A673 (cell line): ENCODE measurements at regions of chr16 and their contacts with region 1.

Region 1: GRCh38 chr16:76294396-76295214 is 17.4 kb downstream of the CNTNAP4 start:
- DNase-seq: no peak
- H3K4me3 ChIP-seq: no peak overlapping the region
- H3K27ac ChIP-seq: no peak overlapping the region
- H3K4me1 ChIP-seq: no peaks in the 10 kb centered on the region
- H3K27me3 ChIP-seq: no peaks in the 10 kb centered on the region
- CTCF ChIP-seq: no peak

Region 2: DNA sequence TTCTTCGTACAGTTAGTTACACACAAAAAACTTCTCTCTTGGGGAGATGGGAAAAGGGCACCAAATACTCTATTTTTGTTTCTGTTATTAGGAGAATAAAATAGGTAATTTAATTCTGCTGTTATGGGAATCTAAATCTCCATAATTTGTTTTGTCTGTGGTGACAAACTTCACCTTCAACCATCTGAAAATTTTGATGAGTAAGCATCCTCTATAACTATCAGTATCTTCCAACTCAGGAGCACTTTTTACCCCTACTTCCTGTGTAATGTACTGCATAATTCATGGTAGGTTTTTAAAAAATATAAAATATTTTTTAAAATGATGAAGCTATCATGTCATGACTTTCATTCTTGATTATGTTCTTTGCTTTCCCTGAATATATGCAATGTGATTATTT is 51.0 kb before region 1 on chr16:
- CTCF ChIA-PET with region 1: no interaction called
- POLR2A ChIA-PET with region 1: no interaction called
- intact Hi-C with region 1: no loop called
- DNase-seq: no peak
- H3K4me3 ChIP-seq: no peak overlapping the region
- H3K27ac ChIP-seq: no peak overlapping the region
- H3K4me1 ChIP-seq: no peaks in the 10 kb centered on the region
- H3K27me3 ChIP-seq: no peaks in the 10 kb centered on the region
- CTCF ChIP-seq: no peak

Region 3: DNA sequence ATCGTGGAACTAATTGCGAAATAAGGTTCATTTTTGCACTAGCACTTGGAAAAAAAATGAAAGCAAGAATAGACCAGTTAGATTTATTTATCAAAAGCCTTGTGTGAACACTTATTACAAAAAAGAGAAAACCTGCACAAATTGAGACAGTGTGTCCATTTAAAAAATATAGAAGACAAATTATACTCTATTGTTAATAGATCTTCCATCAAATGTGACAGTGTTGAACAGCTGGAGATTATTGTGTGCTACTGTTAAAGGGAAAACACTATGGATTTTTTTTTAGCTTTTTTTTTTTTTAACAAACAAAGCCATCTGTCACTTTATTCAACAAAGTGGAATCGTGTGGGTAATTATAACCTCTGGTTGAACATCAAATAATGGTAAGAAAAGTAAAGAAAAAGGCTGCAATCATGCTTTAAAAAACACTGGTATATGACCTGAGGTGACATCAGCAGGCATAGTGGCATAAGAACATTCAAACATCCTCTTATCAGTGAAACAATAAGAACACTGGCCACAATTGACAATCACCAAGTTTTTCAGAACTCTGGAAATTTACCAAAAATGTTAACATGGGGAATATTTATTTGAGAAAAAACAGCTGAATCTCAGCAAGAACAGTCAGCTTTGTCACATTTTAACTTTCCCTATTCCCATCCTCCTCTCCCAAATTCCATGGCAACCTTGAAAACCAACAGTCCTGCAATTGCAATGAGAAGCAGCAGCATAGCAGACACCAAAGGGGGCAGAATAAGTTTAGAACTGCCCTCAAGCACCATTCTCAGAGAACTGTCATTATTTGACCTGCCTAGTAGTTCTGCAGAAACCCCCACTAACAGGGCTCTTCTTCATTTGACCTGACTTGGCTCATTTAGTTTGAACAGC is 454.1 kb after region 1 on chr16:
- CTCF ChIA-PET with region 1: no interaction called
- POLR2A ChIA-PET with region 1: no interaction called
- intact Hi-C with region 1: no loop called
- DNase-seq: no peak
- H3K4me3 ChIP-seq: no peak overlapping the region
- H3K27ac ChIP-seq: no peak overlapping the region
- H3K4me1 ChIP-seq: no peaks in the 10 kb centered on the region
- H3K27me3 ChIP-seq: no peaks in the 10 kb centered on the region
- CTCF ChIP-seq: no peak

Region 4: DNA sequence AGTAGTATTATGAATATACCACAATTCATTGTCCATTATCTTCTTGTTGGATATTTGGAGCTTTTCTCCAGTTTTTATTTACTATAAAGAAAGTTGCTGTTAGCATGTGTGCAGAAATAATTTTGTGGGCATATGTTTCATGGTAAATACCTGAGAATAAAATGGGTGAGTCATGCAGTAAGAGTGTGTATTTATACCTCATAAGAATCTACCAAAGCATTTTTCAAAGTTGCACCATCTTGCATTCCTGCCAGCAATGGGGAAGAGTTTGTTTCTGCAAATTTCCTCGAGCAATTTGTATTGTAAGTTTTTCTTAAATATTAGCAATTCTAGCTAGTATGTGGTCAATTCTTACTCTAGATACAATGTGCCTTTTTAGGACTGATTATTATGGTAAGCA is 888.5 kb after region 1 on chr16:
- CTCF ChIA-PET with region 1: no interaction called
- POLR2A ChIA-PET with region 1: interaction called, 12 read pairs
- intact Hi-C with region 1: no loop called
- DNase-seq: no peak
- H3K4me3 ChIP-seq: no peak overlapping the region
- H3K27ac ChIP-seq: no peak overlapping the region
- H3K4me1 ChIP-seq: no peaks in the 10 kb centered on the region
- H3K27me3 ChIP-seq: peaks cover 26% of the 10 kb centered on the region
- CTCF ChIP-seq: no peak